IMR-90 (cell line): ENCODE measurements at regions of chr14 and their contacts with region 1.

Region 1: DNA sequence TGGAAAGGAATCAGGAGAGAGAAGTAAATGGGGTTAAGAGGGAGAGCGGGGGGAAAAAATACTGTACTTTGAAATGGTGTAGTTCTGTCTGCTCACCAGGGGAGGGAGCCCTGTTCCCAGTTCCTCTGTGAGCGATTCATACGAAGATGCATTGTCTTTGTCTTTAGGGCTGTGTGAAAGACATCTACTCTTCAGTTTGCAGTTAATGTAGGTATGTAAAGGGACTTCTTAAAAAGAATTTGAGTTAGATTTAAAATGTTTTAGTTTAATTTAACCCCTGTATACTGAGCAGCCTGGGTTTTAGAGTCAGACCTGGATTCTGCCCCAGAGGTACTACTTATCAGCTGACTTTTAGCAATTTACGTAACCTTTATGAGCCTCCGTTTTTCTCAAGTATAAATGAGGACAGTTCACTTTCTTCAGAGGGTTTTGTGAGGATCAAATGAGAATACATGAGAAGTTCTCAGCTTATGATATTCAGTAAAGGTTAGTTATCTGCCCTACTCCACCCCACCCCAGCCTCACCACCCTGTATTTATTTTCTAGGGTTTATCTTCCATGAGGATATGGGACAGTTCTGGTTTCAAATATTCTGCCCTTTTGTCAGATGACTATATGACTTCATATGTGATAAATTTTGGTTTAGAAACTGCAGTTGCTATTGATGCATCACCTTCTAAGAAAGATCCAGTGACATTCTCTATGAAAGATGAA is 82.5 kb upstream of the EVL start:
- DNase-seq: peak; percentile 74
- ATAC-seq: peak; percentile 93
- H3K4me3 ChIP-seq: no peak overlapping the region
- H3K27ac ChIP-seq: no peak overlapping the region
- H3K4me1 ChIP-seq: peaks cover 6% of the 10 kb centered on the region
- H3K27me3 ChIP-seq: no peaks in the 10 kb centered on the region
- CTCF ChIP-seq: peak; percentile 93
- POLR2A ChIP-seq: peak; percentile 40; the same call in 1 of the 2 replicates
- RAD21 ChIP-seq: peak; percentile 97

Region 2: GRCh38 chr14:100031536-100032281 is 49.0 kb after region 1 on chr14:
- CTCF ChIA-PET with region 1: interaction called, 5 read pairs
- POLR2A ChIA-PET with region 1: no interaction called
- dilution Hi-C with region 1: no loop called
- in situ Hi-C with region 1: no loop called
- intact Hi-C with region 1: loop called (anchors 1 kb)
- DNase-seq: peak; percentile 99
- ATAC-seq: peak; percentile 73
- H3K4me3 ChIP-seq: peak overlapping the region; percentile 48
- H3K27ac ChIP-seq: peak overlapping the region; percentile 99
- H3K4me1 ChIP-seq: peaks cover 21% of the 10 kb centered on the region
- H3K27me3 ChIP-seq: no peaks in the 10 kb centered on the region
- CTCF ChIP-seq: 0 out of 2 replicates have a peak, but pooled peaks have one; percentile 6
- POLR2A ChIP-seq: peak; percentile 80; the same call in 1 of the 2 replicates
- RAD21 ChIP-seq: peak; percentile 6; the same call in 1 of the 2 replicates

Region 3: DNA sequence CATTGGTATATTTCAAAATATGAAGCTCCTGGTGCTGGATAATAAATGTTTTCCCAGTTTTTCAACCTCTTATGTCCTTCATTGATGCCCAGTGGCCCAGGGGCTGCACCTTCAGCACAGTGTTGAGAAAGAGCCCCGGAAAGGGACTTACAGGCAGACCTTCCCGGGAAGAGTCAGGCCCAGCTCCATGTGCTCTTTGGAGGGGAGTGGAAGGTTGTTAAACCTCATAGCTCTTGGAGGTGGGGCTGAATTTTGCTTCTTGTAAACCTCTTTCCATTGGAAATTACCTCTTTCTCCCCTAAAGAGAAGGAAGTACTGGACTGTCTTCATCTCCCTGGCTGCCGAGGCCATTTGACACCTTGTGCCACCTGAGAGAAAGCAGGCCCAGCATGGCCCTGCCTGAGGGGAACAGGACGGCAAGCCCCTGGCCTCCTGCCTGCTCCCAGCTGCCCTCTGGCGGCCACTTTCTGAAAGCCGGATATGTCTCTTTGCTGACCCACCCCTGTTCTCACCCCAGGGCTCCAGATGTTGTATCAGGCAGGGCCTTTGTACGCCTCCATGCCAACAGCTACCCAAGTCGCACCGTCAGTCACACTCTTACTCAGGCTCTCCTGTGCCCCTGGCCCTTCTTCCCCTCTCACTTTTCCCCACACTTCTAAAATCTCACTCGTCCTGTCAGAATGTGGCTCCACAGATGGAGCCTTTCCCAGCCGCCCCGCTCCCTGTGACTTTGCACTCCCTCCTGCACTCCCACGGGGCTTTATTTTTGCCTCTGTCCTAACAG is 125.5 kb after region 1 on chr14:
- CTCF ChIA-PET with region 1: interaction called, 7 read pairs
- POLR2A ChIA-PET with region 1: no interaction called
- dilution Hi-C with region 1: no loop called
- in situ Hi-C with region 1: loop called (anchors 5 kb)
- intact Hi-C with region 1: loop called (anchors 1 kb)
- DNase-seq: peak; percentile 65
- ATAC-seq: peak; percentile 87
- H3K4me3 ChIP-seq: no peak overlapping the region
- H3K27ac ChIP-seq: no peak overlapping the region
- H3K4me1 ChIP-seq: peaks cover 28% of the 10 kb centered on the region
- H3K27me3 ChIP-seq: no peaks in the 10 kb centered on the region
- CTCF ChIP-seq: peak; percentile 85
- POLR2A ChIP-seq: no peak
- RAD21 ChIP-seq: peak; percentile 93

Region 4: GRCh38 chr14:100114109-100114765 is 131.5 kb after region 1 on chr14:
- CTCF ChIA-PET with region 1: interaction called, 7 read pairs
- POLR2A ChIA-PET with region 1: no interaction called
- dilution Hi-C with region 1: no loop called
- in situ Hi-C with region 1: loop called (anchors 5 kb)
- intact Hi-C with region 1: no loop called
- DNase-seq: no peak
- ATAC-seq: no peak
- H3K4me3 ChIP-seq: no peak overlapping the region
- H3K27ac ChIP-seq: no peak overlapping the region
- H3K4me1 ChIP-seq: peaks cover 9% of the 10 kb centered on the region; the same call in 1 of the 2 replicates
- H3K27me3 ChIP-seq: no peaks in the 10 kb centered on the region
- CTCF ChIP-seq: no peak
- POLR2A ChIP-seq: no peak
- RAD21 ChIP-seq: no peak

Region 5: DNA sequence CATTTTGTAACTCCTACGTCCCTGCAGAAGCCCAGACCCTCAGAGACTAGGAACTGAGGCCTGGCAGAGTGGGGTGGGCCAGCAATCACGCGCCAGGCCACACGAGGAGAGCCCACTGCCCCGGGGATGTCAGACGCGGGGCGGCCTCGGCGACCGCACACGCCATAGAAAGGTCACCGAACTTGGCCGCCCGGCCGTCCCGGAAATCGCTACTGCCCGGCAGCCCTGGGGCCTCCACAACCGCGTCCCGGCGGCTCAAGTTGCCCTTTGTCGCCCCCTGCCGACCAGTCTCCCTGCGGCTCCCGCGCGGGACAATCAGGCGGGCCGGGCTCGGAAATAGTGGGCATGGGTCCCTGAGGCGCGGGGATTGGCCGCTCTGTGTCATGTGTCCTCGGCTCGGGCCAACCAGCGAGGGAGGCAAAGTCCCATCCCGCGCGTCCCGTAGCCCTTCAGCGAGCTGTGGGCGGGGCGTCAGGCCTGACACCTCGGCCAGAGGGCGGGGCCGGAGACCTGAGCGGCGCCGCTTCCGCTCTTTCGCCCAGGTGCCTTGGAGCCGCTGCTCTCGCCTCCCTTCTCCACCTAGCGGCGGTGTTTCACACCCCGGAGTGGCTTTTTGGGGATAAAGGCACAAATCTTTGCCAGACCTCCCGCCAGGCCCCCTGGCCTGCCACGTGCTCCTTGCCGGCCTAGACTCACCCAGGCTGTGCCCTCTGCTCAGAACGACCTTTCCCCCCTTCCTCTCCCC is 210.2 kb after region 1 on chr14:
- CTCF ChIA-PET with region 1: interaction called, 6 read pairs
- POLR2A ChIA-PET with region 1: interaction called, 9 read pairs
- dilution Hi-C with region 1: no loop called
- in situ Hi-C with region 1: loop called (anchors 10 kb)
- intact Hi-C with region 1: loop called (anchors 1 kb)
- DNase-seq: peak; percentile 91
- ATAC-seq: peak; percentile 99
- H3K4me3 ChIP-seq: peak overlapping the region; percentile 52
- H3K27ac ChIP-seq: peak overlapping the region; percentile 84
- H3K4me1 ChIP-seq: peaks cover 6% of the 10 kb centered on the region
- H3K27me3 ChIP-seq: no peaks in the 10 kb centered on the region
- CTCF ChIP-seq: peak; percentile 92
- POLR2A ChIP-seq: no peak
- RAD21 ChIP-seq: peak; percentile 86